Activated T-helper 1 cell treated with anti-CD3 and anti-CD28 coated beads, Interleukin-12 subunit alpha, Interleukin-12 subunit beta, Interleukin-2, Interleukin-4 antibody, amounts not matched to agents 30 ng/mL and 10 ng/mL and 1 ng/mL, durations not matched to agents 14 hours and 24 hours and 36 hours (primary cell): ENCODE measurements at regions of chr17 and their contacts with region 1.

Region 1: DNA sequence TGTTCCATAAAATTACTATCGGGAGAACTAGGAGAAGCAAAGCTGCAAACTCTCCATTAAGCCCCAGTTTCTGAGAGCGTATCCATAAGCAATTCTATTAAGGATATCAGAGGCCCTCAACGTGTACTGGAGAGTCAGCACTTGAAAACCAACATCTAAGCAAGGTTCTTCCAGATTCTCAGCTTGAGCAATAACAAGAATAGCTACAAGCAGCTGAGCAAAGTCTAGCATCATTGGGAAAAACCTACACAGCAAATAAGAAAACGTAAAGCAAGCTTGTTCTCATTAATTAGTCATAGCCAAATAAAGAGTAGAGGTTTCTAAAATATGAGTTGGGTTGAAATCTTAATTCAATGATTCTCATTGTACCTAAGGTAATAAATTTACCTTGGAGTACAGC is 26.9 kb upstream of the COX10 start:
- DNase-seq: no peak
- H3K4me3 Mint-ChIP-seq: no peak overlapping the region
- H3K27ac Mint-ChIP-seq: no peak overlapping the region
- H3K4me1 Mint-ChIP-seq: peaks cover 65% of the 10 kb centered on the region
- H3K27me3 Mint-ChIP-seq: no peaks in the 10 kb centered on the region

Region 2: DNA sequence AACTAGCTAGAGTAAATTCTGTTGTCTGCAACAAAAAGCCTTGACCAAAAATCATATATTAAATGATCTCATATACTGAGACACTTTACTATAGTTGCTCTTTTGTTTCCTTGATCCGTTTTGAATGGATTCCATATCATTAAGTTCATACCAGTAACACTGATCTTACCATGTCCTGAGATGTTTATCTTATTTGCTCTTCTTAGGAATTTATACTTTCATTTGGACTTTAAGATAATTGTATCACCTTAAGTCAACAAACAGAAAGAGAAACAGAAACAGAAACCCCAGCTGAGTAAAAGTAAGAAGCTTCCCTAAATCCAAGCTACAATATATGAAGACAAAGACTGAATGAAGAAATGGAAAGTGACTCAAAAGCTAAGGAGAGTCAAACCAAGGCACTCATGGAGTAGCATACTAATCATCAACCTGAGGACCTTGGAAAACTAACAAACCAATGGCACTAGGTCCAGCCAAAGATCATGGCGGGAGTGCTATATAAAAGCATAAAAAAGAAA is 79.6 kb before region 1 on chr17:
- intact Hi-C with region 1: loop called (anchors 5 kb)
- DNase-seq: no peak
- H3K4me3 Mint-ChIP-seq: peak overlapping the region; percentile 49
- H3K27ac Mint-ChIP-seq: peak overlapping the region; percentile 52
- H3K4me1 Mint-ChIP-seq: peaks cover 30% of the 10 kb centered on the region
- H3K27me3 Mint-ChIP-seq: no peaks in the 10 kb centered on the region

Region 3: GRCh38 chr17:13981881-13982280 is 60.5 kb before region 1 on chr17:
- intact Hi-C with region 1: no loop called
- DNase-seq: no peak
- H3K4me3 Mint-ChIP-seq: no peak overlapping the region
- H3K27ac Mint-ChIP-seq: no peak overlapping the region
- H3K4me1 Mint-ChIP-seq: peaks cover 11% of the 10 kb centered on the region
- H3K27me3 Mint-ChIP-seq: no peaks in the 10 kb centered on the region

Region 4: DNA sequence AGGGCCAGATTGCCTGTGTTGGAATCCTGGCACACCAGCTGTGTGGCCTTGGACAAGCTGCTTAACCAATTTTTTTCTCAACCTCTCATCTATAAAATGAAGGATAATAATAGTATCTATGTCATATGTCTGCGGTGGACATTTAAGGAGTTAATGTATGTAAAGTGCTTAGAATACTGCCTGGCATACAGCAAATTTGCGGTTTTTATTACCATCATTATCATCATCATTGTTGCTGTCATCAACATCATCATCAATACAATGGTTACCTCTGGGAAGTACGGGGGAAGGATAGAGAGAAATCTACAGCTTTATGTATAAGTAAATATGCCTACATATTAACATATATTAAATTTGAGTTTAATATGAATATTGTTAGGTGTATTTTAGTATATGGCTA is 10.2 kb before region 1 on chr17:
- intact Hi-C with region 1: no loop called
- DNase-seq: no peak
- H3K4me3 Mint-ChIP-seq: no peak overlapping the region
- H3K27ac Mint-ChIP-seq: no peak overlapping the region
- H3K4me1 Mint-ChIP-seq: peaks cover 24% of the 10 kb centered on the region
- H3K27me3 Mint-ChIP-seq: no peaks in the 10 kb centered on the region

Region 5: GRCh38 chr17:14057591-14057990 is 15.2 kb after region 1 on chr17:
- intact Hi-C with region 1: loop called (anchors 2 kb)
- DNase-seq: no peak
- H3K4me3 Mint-ChIP-seq: no peak overlapping the region
- H3K27ac Mint-ChIP-seq: no peak overlapping the region
- H3K4me1 Mint-ChIP-seq: peaks cover 48% of the 10 kb centered on the region
- H3K27me3 Mint-ChIP-seq: no peaks in the 10 kb centered on the region

Region 6: GRCh38 chr17:14098224-14098623 is 55.8 kb after region 1 on chr17:
- intact Hi-C with region 1: no loop called
- DNase-seq: no peak
- H3K4me3 Mint-ChIP-seq: no peak overlapping the region
- H3K27ac Mint-ChIP-seq: no peak overlapping the region
- H3K4me1 Mint-ChIP-seq: peaks cover 22% of the 10 kb centered on the region
- H3K27me3 Mint-ChIP-seq: no peaks in the 10 kb centered on the region

Region 7: DNA sequence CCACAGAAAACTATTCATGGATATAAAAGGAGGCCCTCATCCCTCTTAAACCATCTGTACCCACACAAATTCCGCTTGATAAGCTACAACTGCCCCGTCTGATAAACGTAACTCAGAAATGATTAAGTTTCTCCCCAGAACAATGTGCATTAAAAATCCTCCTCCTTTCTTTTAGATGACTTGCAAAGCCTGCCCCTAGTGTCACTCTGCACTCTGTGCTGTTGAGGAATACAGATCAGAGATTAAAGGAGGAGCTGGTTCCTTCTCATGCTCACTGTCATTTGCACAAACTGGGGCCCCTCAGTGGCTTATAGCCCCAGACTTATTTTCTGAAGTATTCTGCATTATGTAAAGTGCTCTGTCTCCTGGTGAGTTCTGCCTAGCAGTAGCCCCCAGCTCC is 161.0 kb after region 1 on chr17:
- intact Hi-C with region 1: loop called (anchors 2 kb)
- DNase-seq: peak; percentile 32
- H3K4me3 Mint-ChIP-seq: peak overlapping the region; percentile 24
- H3K27ac Mint-ChIP-seq: peak overlapping the region; percentile 85
- H3K4me1 Mint-ChIP-seq: peaks cover 90% of the 10 kb centered on the region
- H3K27me3 Mint-ChIP-seq: no peaks in the 10 kb centered on the region

Region 8: GRCh38 chr17:14282726-14283125 is 240.3 kb after region 1 on chr17:
- intact Hi-C with region 1: no loop called
- DNase-seq: no peak
- H3K4me3 Mint-ChIP-seq: no peak overlapping the region
- H3K27ac Mint-ChIP-seq: no peak overlapping the region
- H3K4me1 Mint-ChIP-seq: no peaks in the 10 kb centered on the region
- H3K27me3 Mint-ChIP-seq: peaks cover 7% of the 10 kb centered on the region